Activated CD8-positive, alpha-beta T cell treated with anti-CD3 and anti-CD28 coated beads for 36 hours (primary cell): ENCODE measurements at regions of chr20 and their contacts with region 1.

Region 1: DNA sequence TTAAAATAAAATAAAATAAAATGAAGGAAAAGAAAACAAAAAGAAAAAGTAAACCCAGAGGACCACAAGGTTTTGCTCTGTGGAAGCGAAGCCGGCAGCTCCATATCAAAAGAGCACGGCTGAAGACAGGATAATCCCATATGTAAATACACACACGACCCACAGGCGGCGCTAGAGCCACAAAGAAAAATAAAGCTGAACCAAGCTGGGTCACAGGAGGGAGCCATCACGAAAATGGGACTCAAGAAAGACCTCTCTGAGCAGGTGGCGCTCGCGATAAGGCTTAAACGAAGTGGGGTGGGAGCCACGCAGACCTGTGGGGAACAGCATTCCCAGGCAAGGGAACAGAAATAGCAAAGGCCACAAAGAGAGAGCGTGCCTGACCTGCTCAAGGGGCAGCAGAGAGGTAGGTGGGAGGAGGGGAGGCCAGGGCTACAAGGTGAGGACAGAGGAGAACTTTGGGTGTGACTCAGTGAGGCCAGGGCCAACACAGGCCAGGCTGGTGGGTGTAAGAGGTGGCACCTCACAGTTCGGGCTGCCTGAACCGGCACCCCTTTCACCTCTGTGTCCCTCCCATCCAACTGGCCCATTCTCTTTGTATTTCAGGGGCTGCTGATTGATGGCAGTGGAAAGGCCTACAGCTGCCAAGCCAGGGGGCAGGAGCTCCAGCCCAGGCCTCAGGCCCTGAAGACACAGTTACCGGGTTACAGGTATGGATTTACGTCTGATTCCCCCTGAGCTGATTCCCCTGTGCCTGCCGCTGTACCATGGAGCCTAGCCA is 26.0 kb downstream of the PTGIS start:
- DNase-seq: peak; percentile 85
- ATAC-seq: peak; percentile 88
- H3K4me3 Mint-ChIP-seq: no peak overlapping the region
- H3K27ac Mint-ChIP-seq: peak overlapping the region; percentile 88
- H3K4me1 Mint-ChIP-seq: peaks cover 16% of the 10 kb centered on the region
- H3K27me3 Mint-ChIP-seq: peaks cover 13% of the 10 kb centered on the region
- CTCF ChIP-seq: peak; percentile 97

Region 2: DNA sequence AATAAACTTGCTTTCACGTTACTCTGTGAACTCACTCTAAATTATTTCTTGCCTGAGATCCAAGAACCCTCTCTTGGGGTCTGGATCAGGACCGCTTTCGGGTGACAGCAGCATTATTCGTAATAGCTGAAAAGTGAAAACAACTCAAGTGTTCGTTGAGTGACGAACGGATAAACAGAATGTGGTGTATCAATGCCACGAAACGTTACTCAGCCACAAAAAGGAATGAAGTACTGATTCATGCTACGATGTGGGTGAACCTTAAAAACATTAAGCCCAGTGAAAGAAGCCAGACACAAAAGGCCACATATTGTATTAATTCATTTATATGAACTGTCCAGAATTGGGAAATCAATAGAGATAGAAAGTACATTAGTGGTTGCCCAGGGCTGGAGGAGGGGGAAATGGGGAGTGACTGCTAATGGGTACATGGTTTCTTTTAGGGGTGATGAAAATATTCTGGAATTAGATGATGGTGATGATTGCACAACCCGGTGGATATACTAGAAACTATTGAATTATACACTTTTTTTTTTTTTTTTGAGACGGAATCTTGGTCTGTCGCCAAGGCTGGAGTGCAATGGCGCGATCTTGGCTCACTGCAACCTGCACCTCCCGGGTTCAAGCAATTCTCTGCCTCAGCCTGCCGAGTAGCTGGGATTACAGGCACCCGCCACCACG is 17.6 kb after region 1 on chr20:
- CTCF ChIA-PET with region 1: interaction called, 10 read pairs
- POLR2A ChIA-PET with region 1: interaction called, 7 read pairs
- intact Hi-C with region 1: no loop called
- DNase-seq: no peak
- ATAC-seq: no peak
- H3K4me3 Mint-ChIP-seq: no peak overlapping the region
- H3K27ac Mint-ChIP-seq: no peak overlapping the region
- H3K4me1 Mint-ChIP-seq: no peaks in the 10 kb centered on the region
- H3K27me3 Mint-ChIP-seq: peaks cover 47% of the 10 kb centered on the region
- CTCF ChIP-seq: no peak

Region 3: DNA sequence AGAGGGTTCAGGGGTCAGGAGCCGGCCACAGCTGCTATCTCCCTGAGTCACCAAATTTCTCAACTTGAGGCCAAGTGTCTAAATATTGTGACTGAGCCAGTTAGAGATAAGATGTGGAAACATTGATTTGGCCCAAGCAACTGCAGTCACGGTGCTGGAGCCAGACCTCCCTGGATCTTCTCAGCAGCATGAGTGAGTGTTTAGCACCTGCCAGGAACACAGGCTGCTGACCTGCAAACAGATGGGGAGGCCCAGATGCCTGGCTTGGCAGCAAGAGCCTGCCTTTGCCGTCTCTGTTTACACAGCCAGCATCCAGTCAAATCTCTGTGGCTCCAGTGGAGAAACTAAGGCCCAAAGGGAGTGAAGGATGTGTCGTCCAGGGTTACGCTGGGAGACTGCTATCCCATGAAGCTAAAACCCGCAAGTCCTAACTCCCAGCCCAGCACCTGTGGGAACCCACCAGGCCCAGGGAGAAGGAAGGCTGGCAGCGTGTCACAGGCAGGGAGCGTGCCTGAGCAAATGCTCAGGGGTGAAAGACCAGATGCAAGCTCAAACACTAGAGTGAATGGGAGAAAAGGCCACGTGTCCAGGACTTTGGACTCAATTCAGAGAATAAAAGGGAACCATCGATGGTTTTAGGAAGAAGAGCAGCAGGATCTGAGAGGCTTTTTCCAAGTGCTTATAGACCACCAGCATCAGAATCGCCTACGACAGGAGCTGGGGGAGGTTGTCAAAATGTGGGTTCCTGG is 41.9 kb after region 1 on chr20:
- CTCF ChIA-PET with region 1: interaction called, 10 read pairs
- POLR2A ChIA-PET with region 1: interaction called, 3 read pairs
- intact Hi-C with region 1: no loop called
- DNase-seq: no peak
- ATAC-seq: peak; percentile 52
- H3K4me3 Mint-ChIP-seq: no peak overlapping the region
- H3K27ac Mint-ChIP-seq: no peak overlapping the region
- H3K4me1 Mint-ChIP-seq: peaks cover 9% of the 10 kb centered on the region
- H3K27me3 Mint-ChIP-seq: peaks cover 22% of the 10 kb centered on the region
- CTCF ChIP-seq: no peak

Region 4: DNA sequence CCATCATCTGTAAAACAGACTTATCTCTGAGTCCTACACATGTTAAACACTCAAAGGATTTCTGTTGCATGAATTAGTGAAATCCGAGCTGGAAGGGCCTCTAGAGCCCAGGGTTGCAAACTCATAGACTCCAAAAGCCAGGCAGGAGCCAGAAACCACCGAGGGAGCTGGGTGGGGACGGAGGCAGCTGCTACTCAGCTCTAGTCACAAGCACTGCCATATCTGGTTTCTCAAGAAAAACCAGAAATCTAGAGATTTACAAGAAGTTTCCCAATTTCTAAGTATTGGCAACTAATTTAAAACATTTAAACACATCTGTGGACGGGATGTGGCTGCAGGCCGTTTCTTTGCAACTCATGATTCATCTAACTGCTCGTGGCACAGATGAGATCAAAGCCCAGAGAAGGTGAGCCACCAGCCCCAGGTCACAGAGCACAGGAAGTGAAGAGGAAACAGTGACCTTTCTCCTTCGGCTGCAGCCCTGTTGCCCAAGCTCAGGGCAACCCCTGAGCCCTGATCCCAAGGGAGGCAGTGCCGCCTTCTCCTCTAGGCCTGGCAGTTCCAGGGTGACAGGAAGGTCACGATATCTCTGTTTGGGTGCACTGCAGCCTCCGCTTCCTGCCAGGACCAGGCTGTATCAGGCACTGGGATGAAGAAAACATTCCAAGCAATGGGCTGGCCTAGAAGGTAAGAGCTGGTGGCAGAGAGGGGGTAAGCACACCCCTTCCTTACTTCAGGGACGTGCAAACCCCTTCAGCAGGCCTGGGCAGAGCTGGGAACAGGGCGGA is 52.4 kb after region 1 on chr20:
- CTCF ChIA-PET with region 1: interaction called, 55 read pairs
- POLR2A ChIA-PET with region 1: interaction called, 14 read pairs
- intact Hi-C with region 1: no loop called
- DNase-seq: peak; percentile 94
- ATAC-seq: peak; percentile 57
- H3K4me3 Mint-ChIP-seq: peak overlapping the region; percentile 85
- H3K27ac Mint-ChIP-seq: peak overlapping the region; percentile 96
- H3K4me1 Mint-ChIP-seq: peaks cover 85% of the 10 kb centered on the region
- H3K27me3 Mint-ChIP-seq: no peaks in the 10 kb centered on the region
- CTCF ChIP-seq: no peak

Region 5: DNA sequence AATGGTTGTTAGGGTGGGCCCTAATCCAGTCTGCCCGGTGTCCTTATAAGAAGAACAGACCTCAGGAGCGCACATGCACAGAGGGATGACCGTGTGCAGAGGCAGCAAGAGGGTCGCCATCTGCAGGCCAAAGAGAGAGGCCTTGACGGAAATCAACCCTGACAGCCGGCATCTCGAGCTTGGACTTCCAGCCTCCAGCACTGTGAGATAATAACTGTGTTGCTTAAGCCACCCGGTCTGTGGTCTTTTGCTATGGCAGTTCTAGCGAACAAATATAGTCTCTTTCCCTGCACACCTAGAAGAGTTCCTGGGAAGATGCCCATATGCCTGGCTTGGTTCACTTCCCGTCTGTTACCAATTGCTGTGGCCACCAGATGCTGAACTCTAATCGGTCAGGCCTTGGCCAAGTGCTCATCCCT is 61.3 kb after region 1 on chr20:
- CTCF ChIA-PET with region 1: interaction called, 438 read pairs
- POLR2A ChIA-PET with region 1: interaction called, 12 read pairs
- intact Hi-C with region 1: loop called (anchors 2 kb)
- DNase-seq: peak; percentile 35
- ATAC-seq: no peak
- H3K4me3 Mint-ChIP-seq: no peak overlapping the region
- H3K27ac Mint-ChIP-seq: peak overlapping the region; percentile 30
- H3K4me1 Mint-ChIP-seq: peaks cover 20% of the 10 kb centered on the region
- H3K27me3 Mint-ChIP-seq: peaks cover 9% of the 10 kb centered on the region
- CTCF ChIP-seq: peak; percentile 6